ENCODE measurements at regions of chr2 and their contacts with region 1.

Region 1: DNA sequence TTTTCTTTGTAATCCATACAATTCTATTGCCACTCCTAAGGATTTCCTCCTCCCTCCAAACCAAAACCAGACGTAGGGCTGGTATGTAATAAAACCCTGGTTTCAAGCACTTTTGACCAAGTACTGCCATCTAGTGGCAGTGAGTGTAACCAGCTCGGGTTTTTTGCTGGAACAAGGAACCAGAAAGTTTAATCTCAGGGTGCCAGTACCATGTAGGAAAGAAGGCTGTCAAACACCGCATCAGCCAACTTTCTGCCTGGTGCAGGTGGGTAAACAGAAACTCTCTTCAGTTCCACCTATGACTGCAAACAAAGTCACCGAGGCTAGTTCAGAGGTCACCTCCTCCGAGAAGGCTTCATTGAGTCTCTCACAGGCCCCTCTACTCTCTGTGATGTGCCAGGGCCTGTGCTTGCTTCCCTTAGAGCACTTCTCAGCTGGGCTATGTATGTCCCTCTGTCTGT is 10.2 kb upstream of the THNSL2 start:
- DNase-seq: no peak
- H3K4me3 ChIP-seq: no peak overlapping the region
- H3K27ac ChIP-seq: no peak overlapping the region
- H3K4me1 ChIP-seq: no peaks in the 10 kb centered on the region
- H3K27me3 ChIP-seq: no peaks in the 10 kb centered on the region
- CTCF ChIP-seq: peak; percentile 27 to 73 (median 65)
- POLR2A ChIP-seq: no peak

Region 2: DNA sequence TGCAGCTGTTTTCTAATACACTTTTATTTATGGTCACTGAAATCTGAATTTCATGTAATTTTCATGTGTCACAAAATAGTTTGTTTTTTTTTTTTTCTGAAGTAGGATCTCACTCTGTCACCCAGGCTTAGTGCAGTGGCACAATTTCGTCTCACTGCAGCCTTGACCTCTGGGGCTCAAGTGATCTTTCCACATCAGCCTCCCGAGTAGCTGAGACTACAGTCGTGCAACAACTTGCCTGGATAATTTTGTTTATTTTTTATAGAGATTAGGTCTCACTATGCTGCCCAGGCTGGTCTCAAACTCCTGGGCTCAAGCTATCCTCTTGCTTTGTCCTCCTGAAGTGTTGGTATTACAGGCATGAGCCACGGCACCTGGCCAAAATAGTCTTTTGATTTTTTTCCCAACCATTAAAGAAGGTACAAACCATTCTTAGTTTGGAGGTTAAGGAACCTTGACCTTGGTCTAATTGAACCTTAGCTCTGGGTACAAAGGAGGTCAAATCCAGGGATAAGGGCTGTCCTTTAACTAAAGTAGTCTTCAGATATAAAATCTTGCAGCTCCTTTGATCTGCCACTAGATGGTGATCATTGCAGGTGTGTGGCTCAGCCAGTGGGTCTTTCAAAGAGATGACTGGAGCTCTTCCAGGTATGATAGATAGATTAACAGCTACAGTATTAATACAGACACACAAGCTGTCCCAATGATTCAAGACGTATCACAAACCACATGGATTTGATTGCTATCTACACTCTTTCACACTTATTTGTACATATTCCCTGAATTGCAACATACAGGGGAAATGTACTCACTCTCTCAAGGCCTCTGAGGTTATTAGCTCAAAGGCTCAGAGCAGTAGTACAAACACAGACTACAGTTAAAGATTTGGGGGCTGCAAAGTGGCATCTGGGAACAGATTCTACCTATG is 99.7 kb before region 1 on chr2:
- intact Hi-C with region 1: loop called (anchors 5 kb)
- DNase-seq: no peak
- H3K4me3 ChIP-seq: no peak overlapping the region
- H3K27ac ChIP-seq: no peak overlapping the region
- H3K4me1 ChIP-seq: peaks cover 6% of the 10 kb centered on the region
- H3K27me3 ChIP-seq: no peaks in the 10 kb centered on the region
- CTCF ChIP-seq: peak in 2 of 3 experiments; percentile 36 to 54
- POLR2A ChIP-seq: no peak